Aorta (tissue), 5 donors: ENCODE measurements at regions of chr6 and their contacts with region 1.

Region 1: DNA sequence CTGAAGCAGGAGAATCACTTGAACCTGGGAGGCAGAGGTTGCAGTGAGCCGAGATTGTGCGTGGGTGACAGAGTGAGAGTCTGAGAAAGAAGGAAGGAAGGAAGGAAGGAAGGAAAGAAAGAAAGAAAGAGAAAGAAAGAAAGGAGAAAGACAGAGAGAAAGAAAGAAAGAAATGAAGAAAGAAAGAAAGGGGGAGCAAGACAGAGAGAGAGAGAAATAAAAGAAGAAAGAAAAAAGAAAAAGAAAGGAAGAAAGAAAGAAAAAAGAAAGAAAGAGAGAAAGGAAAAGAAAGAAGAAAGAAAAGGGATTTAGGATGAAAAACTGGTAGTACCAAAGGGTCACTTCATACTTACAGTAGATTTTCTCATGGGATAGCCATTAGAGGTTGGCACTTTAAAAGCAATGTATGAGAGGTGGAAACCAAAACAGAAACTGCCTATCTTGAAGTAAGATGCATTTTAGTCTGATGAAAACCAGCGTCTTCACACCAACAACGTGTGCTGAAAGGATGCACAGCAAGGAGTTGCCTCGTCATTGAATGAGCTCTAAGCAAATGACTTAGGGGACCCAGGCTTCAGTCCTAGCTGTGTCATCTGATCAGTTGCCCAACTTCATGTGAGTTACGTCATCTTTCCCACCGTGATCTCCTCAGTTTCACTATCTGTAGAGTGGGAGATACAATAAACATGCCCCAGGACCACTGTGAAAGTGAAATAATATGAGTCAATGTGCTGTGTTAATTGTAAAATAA is 133.9 kb upstream of the NEDD9 start:
- DNase-seq: no peak
- ATAC-seq: no peak
- H3K4me3 ChIP-seq: no peak overlapping the region
- H3K27ac ChIP-seq: peak overlapping the region in 1 of 2 donors; percentile 45
- H3K4me1 ChIP-seq: peaks cover 0 to 2% of the 10 kb centered on the region in 2 donors
- H3K27me3 ChIP-seq: no peaks in the 10 kb centered on the region

Region 2: GRCh38 chr6:10824297-10824696 is 542.1 kb before region 1 on chr6:
- intact Hi-C with region 1: no loop called
- DNase-seq: no peak
- ATAC-seq: no peak
- H3K4me3 ChIP-seq: no peak overlapping the region
- H3K27ac ChIP-seq: no peak overlapping the region
- H3K4me1 ChIP-seq: no peaks in the 10 kb centered on the region
- H3K27me3 ChIP-seq: no peaks in the 10 kb centered on the region

Region 3: DNA sequence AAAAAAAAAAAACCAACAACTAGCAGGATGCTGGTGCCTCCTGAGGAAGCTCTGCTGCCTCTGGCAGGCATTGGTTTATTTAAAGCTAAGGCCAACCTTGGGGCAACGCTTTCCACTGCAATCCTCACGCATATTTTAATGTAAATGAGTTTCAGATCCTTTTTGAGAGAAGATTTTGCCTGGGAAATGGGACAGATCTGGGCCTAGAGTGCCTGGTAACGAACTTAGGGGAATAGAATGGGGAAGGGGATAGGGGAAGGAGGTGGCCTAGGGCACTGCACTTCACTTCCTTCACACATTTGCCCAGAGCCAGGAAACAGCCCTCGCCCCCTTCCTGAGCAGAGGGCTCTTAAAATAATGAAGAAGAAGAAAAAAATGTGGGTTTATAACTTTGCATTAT is 38.5 kb after region 1 on chr6:
- intact Hi-C with region 1: loop called in 1 of 2 experiments (anchors 5 kb)
- DNase-seq: no peak
- ATAC-seq: no peak
- H3K4me3 ChIP-seq: no peak overlapping the region
- H3K27ac ChIP-seq: peak overlapping the region; percentile 90 to 98
- H3K4me1 ChIP-seq: no peaks in the 10 kb centered on the region
- H3K27me3 ChIP-seq: no peaks in the 10 kb centered on the region